Endothelial cell of umbilical vein (primary cell): ENCODE measurements at regions of chr16 and their contacts with region 1.

Region 1: GRCh38 chr16:83187405-83187804 is 560.6 kb downstream of the CDH13 start:
- DNase-seq: peak; percentile 53
- H3K4me3 ChIP-seq: no peak overlapping the region
- H3K27ac ChIP-seq: no peak overlapping the region
- H3K4me1 ChIP-seq: no peaks in the 10 kb centered on the region
- H3K27me3 ChIP-seq: no peaks in the 10 kb centered on the region
- CTCF ChIP-seq: no peak
- POLR2A ChIP-seq: no peak

Region 2: DNA sequence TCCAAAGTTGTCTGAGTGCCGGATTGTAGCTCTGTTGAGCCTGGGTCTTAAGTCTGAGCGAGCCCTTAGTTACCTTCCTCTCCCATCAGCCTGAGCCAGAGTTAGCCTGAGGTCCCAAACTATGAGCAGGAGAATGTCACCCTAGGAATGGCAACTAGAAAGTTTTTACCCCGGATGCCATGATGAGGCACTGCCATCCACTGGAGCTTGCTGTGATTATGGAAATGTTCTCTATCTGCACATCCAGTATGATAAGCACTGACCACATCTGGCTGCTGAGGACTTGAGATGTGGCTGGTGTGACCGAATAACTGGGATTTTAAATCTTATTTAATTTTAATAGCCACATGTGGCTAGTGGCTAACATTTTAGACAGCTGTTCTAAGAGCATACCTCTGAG is 10.6 kb before region 1 on chr16:
- CTCF ChIA-PET with region 1: interaction called, 11 read pairs
- POLR2A ChIA-PET with region 1: no interaction called
- dilution Hi-C with region 1: no loop called
- intact Hi-C with region 1: no loop called
- DNase-seq: no peak
- H3K4me3 ChIP-seq: no peak overlapping the region
- H3K27ac ChIP-seq: no peak overlapping the region
- H3K4me1 ChIP-seq: peaks cover 14% of the 10 kb centered on the region
- H3K27me3 ChIP-seq: no peaks in the 10 kb centered on the region
- CTCF ChIP-seq: no peak
- POLR2A ChIP-seq: no peak

Region 3: GRCh38 chr16:84072014-84072413 is 884.6 kb after region 1 on chr16:
- CTCF ChIA-PET with region 1: no interaction called
- POLR2A ChIA-PET with region 1: no interaction called
- dilution Hi-C with region 1: no loop called
- intact Hi-C with region 1: no loop called
- DNase-seq: peak; percentile 74
- H3K4me3 ChIP-seq: no peak overlapping the region
- H3K27ac ChIP-seq: peak overlapping the region; percentile 6
- H3K4me1 ChIP-seq: peaks cover 20% of the 10 kb centered on the region
- H3K27me3 ChIP-seq: no peaks in the 10 kb centered on the region
- CTCF ChIP-seq: no peak
- POLR2A ChIP-seq: peak; percentile 71